CD4-positive, alpha-beta memory T cell (primary cell): ENCODE measurements at regions of chr12 and their contacts with region 1.

Region 1: DNA sequence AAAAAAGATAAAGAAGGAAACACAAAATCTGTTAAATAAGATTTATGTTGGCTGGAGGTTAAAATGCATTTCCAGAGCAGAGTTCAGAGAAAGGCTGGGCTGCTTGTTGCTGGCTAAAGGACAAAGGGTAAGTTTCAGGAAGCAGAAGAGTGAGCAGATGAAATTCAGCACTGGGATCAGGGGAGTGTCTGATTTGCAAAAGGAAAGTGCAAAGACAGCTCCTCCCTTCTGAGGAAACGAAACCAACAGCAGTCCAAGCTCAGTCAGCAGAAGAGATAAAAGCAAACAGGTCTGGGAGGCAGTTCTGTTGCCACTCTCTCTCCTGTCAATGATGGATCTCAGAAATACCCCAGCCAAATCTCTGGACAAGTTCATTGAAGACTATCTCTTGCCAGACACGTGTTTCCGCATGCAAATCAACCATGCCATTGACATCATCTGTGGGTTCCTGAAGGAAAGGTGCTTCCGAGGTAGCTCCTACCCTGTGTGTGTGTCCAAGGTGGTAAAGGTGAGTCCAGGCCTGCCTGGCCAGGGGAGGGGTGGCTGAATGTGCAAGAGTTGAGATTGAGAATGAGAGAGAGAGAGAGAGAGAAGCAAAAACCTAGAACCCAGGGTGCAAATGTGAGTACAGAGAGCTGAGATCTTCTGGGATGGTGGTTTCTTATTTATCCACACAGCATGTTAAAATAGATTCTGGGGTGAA is at the start of gene OAS1:
- DNase-seq: peak; percentile 40 to 58 (median 47)
- H3K4me3 ChIP-seq: peak within 1 kb of the TSS; percentile 69 to 79
- H3K4me3 Mint-ChIP-seq: peak within 1 kb of the TSS; percentile 89 to 98 (median 96)
- H3K27ac ChIP-seq: peak within 1 kb of the TSS; percentile 68
- H3K27ac Mint-ChIP-seq: peak within 1 kb of the TSS; percentile 86 to 97 (median 94)
- H3K4me1 ChIP-seq: peaks cover 79% of the 10 kb centered on the region
- H3K4me1 Mint-ChIP-seq: peaks cover 52 to 91% (median 72%) of the 10 kb centered on the region in 4 donors
- H3K27me3 ChIP-seq: no peaks in the 10 kb centered on the region
- H3K27me3 Mint-ChIP-seq: no peaks in the 10 kb centered on the region
- total RNA-seq, gene OAS1: 8.4 to 10.9 TPM

Region 2: DNA sequence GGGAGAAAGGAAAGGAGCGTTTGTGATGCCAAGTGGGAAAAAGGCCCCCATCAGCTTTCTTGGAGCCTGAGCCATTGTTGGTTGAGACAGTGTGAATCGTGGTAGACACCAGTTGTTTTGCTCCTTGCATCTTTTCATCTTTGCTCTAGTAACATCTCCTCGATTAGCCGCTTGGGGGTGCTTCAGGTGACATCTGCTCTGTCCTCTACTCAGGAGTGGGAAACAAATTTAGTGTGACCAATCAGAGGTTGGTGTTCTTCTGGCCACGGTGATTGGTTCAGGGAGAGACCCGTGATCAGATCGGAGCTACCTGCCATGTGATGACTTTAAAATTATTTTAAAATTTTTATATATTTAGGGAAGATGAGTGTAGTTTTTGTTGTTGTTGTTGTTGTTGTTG is 181.5 kb before region 1 on chr12:
- CTCF ChIA-PET with region 1: no interaction called
- POLR2A ChIA-PET with region 1: no interaction called
- intact Hi-C with region 1: no loop called
- DNase-seq: no peak
- H3K4me3 ChIP-seq: no peak overlapping the region
- H3K4me3 Mint-ChIP-seq: no peak overlapping the region
- H3K27ac ChIP-seq: no peak overlapping the region
- H3K27ac Mint-ChIP-seq: no peak overlapping the region
- H3K4me1 ChIP-seq: no peaks in the 10 kb centered on the region
- H3K4me1 Mint-ChIP-seq: peaks cover 0 to 1% (median 0%) of the 10 kb centered on the region in 4 donors
- H3K27me3 ChIP-seq: no peaks in the 10 kb centered on the region
- H3K27me3 Mint-ChIP-seq: peaks cover 8 to 17% of the 10 kb centered on the region in 2 donors

Region 3: DNA sequence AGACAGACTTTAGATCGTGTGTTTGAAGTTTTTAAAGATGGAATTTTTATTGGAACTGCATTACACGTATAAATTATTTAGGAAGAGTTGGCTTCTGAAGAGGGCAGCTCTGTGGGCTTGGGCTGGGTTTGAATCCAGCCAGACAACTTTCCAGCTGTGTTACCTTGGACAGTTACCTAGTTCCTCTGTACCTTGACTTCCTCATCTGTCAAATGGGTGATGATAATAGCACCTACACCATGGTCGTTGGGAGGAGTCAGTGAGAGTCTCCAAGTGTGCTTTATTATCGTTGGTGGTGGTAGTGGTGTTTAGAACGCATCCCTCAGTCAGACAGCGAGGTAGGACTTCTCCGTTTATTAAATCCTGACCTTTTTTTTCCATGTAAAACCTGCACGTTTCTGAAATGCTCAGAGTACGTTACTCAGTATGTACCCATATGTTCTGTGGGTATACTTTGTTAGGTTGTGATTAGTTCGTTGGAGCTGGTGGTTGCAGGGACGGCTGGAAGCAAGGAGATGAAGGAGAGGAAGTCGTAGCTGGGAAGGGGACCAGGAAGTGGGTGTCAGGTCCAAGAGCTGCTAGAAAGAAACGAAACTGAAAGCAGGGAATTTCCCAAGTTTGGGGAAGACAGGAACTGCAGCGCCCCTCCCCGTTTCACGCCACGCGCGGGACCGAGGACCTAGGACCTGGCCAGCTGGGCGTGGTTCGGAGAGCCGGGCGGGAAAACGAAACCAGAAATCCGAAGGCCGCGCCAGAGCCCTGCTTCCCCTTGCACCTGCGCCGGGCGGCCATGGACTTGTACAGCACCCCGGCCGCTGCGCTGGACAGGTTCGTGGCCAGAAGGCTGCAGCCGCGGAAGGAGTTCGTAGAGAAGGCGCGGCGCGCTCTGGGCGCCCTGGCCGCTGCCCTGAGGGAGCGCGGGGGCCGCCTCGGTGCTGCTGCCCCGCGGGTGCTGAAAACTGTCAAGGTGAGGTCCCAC is 31.2 kb after region 1 on chr12 and contains the start of gene OAS3:
- CTCF ChIA-PET with region 1: interaction called, 15 read pairs
- POLR2A ChIA-PET with region 1: interaction called, 38 read pairs
- intact Hi-C with region 1: loop called (anchors 2 kb)
- DNase-seq: peak; percentile 66 to 87 (median 70)
- H3K4me3 ChIP-seq: peak within 1 kb of the TSS; percentile 72 to 84
- H3K4me3 Mint-ChIP-seq: peak within 1 kb of the TSS; percentile 87 to 100 (median 94)
- H3K27ac ChIP-seq: peak within 1 kb of the TSS; percentile 72
- H3K27ac Mint-ChIP-seq: peak within 1 kb of the TSS; percentile 85 to 98 (median 96)
- H3K4me1 ChIP-seq: peaks cover 35% of the 10 kb centered on the region
- H3K4me1 Mint-ChIP-seq: peaks cover 28 to 45% (median 36%) of the 10 kb centered on the region in 4 donors
- H3K27me3 ChIP-seq: no peaks in the 10 kb centered on the region
- H3K27me3 Mint-ChIP-seq: no peaks in the 10 kb centered on the region
- total RNA-seq, gene OAS3: 20.3 to 22.5 TPM

Region 4: DNA sequence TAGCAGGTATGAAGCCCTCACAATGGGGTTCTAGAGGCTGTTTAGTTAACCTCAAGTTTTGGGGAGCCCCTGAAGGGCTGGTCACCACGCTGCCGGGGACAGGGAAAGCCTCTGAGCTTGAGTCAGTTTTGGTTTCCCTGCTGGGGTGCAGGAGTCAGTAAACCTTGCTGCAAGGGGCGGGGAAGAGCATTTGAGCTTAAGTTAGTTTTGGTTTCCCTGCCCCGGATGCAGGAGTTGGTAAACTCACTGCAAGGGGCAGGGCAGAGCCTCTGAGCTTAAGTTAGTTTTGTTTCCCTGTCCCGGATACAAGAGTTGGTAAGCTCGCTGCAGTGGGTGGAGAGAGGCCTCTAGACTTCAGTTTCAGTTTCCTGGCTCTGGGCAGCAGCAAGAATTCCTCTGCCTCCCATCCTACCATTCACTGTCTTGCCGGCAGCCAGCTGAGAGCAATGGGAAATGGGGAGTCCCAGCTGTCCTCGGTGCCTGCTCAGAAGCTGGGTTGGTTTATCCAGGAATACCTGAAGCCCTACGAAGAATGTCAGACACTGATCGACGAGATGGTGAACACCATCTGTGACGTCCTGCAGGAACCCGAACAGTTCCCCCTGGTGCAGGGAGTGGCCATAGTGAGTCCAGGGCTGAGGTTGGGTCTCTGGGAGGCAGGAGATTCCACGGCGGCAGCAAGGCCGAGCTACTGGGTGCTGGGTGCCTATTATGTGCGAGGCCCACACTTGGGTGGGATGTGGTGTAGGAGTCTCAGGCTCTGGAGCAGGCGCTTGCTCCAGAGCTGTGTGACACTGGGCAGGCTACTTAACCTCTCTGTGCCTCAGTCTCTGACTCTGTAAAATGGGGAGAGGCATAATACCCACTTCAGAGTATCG is 71.5 kb after region 1 on chr12 and contains the start of gene OAS2:
- CTCF ChIA-PET with region 1: interaction called, 43 read pairs
- POLR2A ChIA-PET with region 1: interaction called, 144 read pairs
- intact Hi-C with region 1: loop called (anchors 1 kb)
- DNase-seq: peak; percentile 82 to 92 (median 87)
- H3K4me3 ChIP-seq: peak within 1 kb of the TSS; percentile 87 to 88
- H3K4me3 Mint-ChIP-seq: peak within 1 kb of the TSS; percentile 88 to 100 (median 99)
- H3K27ac ChIP-seq: peak within 1 kb of the TSS; percentile 91
- H3K27ac Mint-ChIP-seq: peak within 1 kb of the TSS; percentile 97 to 99 (median 99)
- H3K4me1 ChIP-seq: peaks cover 51% of the 10 kb centered on the region
- H3K4me1 Mint-ChIP-seq: peaks cover 28 to 58% (median 45%) of the 10 kb centered on the region in 4 donors
- H3K27me3 ChIP-seq: no peaks in the 10 kb centered on the region
- H3K27me3 Mint-ChIP-seq: no peaks in the 10 kb centered on the region
- total RNA-seq, gene OAS2: 73.5 to 77.4 TPM

Region 5: DNA sequence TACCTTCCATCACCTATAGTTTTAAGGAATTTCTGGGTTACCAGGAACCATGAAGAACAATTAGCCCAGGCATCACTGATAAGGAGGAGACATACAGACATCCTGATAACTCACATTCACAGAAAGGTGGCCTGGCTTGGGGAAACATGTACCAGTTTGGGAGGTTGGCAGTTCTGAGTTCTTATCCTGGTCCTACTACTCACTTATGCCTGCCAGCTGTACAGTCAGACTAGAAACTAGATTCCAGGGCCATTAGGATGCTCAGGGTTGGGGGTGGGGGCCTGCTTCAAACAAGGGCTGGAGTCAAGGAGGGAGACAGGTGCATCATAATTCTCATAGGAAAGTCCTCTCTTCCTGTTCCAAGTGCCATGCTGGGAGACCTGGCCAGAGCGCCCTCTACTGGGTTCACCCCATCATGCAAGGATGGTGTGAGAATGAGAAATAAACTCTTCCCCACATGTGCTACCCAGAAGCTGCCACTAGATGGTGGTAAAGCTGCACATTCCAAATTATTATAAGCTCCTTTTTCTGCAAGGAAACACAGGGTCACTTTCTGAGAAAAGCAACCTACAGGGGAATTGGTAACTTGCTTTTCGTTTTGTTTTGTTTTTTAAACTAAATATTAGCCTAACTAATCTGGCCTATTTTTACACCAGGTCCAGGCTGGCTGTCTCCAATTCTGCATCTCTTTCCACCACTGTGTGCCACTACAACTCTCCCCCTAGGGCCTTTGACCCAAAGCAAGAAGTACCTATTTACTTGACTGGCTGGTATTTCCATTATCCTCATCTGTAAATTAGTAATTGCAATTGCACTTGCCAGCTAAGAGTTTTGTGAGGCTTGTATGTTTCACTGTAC is 85.9 kb after region 1 on chr12:
- CTCF ChIA-PET with region 1: interaction called, 19 read pairs
- POLR2A ChIA-PET with region 1: no interaction called
- intact Hi-C with region 1: no loop called
- DNase-seq: peak; percentile 37 to 62 (median 50)
- H3K4me3 ChIP-seq: no peak overlapping the region
- H3K4me3 Mint-ChIP-seq: no peak overlapping the region
- H3K27ac ChIP-seq: no peak overlapping the region
- H3K27ac Mint-ChIP-seq: peak overlapping the region; percentile 24 to 88 (median 67)
- H3K4me1 ChIP-seq: peaks cover 9% of the 10 kb centered on the region
- H3K4me1 Mint-ChIP-seq: peaks cover 22 to 26% (median 24%) of the 10 kb centered on the region in 4 donors
- H3K27me3 ChIP-seq: no peaks in the 10 kb centered on the region
- H3K27me3 Mint-ChIP-seq: no peaks in the 10 kb centered on the region

Region 6: GRCh38 chr12:113030875-113031525 is 124.1 kb after region 1 on chr12:
- CTCF ChIA-PET with region 1: interaction called, 72 read pairs
- POLR2A ChIA-PET with region 1: interaction called, 4 read pairs
- intact Hi-C with region 1: no loop called
- DNase-seq: peak in 4 of 5 donors; percentile 24 to 35 (median 32)
- H3K4me3 ChIP-seq: no peak overlapping the region
- H3K4me3 Mint-ChIP-seq: no peak overlapping the region
- H3K27ac ChIP-seq: no peak overlapping the region
- H3K27ac Mint-ChIP-seq: no peak overlapping the region
- H3K4me1 ChIP-seq: no peaks in the 10 kb centered on the region
- H3K4me1 Mint-ChIP-seq: peaks cover 0 to 5% (median 3%) of the 10 kb centered on the region in 4 donors
- H3K27me3 ChIP-seq: no peaks in the 10 kb centered on the region
- H3K27me3 Mint-ChIP-seq: peaks cover 0 to 5% of the 10 kb centered on the region in 2 donors